Activated naive CD4-positive, alpha-beta T cell treated with anti-CD3 and anti-CD28 coated beads for 36 hours (primary cell): ENCODE measurements at regions of chr16 and their contacts with region 1.

Region 1: DNA sequence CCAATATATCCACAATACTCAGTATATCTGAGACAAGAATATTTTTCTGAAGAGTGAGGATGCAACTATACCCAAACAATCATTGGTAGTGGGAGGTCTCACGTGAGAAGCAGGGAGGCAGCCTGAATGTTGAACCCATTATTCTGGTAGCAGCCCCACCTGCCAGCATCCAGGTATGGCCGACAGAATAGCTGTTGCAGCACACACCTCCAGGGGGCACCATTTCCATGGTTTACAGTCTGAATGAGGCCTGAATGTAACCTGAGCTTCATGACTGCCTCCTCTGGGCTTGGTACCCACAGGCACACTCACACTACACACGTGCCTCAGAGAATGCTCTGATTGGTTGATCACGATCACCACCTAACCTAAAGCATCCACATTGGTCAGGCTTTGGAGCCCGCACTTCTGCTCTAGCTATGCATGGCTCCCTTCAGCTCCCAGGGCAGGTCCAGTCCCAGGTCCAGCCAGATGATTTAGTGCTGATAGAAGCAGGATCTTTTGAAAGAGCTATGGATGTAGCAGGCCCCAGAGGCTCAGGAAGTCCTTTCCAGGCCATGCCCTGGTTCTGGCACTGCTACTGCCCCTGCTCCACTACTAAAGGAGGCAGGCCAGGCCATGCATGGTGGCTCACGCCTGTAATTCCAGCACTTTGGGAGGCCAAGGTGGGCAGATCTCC is 11.0 kb upstream of the CBFB start:
- DNase-seq: peak; percentile 96
- H3K4me3 Mint-ChIP-seq: no peak overlapping the region
- H3K27ac Mint-ChIP-seq: no peak overlapping the region
- H3K4me1 Mint-ChIP-seq: peaks cover 5% of the 10 kb centered on the region
- H3K27me3 Mint-ChIP-seq: peaks cover 4% of the 10 kb centered on the region

Region 2: GRCh38 chr16:66894948-66895688 is 122.8 kb before region 1 on chr16:
- CTCF ChIA-PET with region 1: no interaction called
- intact Hi-C with region 1: loop called (anchors 2 kb)
- DNase-seq: peak; percentile 81
- H3K4me3 Mint-ChIP-seq: no peak overlapping the region
- H3K27ac Mint-ChIP-seq: no peak overlapping the region
- H3K4me1 Mint-ChIP-seq: peaks cover 8% of the 10 kb centered on the region
- H3K27me3 Mint-ChIP-seq: no peaks in the 10 kb centered on the region

Region 3: GRCh38 chr16:66961065-66961744 is 56.7 kb before region 1 on chr16 and contains the start of gene CES3:
- CTCF ChIA-PET with region 1: interaction called, 13 read pairs
- intact Hi-C with region 1: no loop called
- DNase-seq: peak; percentile 77
- H3K4me3 Mint-ChIP-seq: no peak within 1 kb of the TSS
- H3K27ac Mint-ChIP-seq: no peak within 1 kb of the TSS
- H3K4me1 Mint-ChIP-seq: peaks cover 19% of the 10 kb centered on the region
- H3K27me3 Mint-ChIP-seq: no peaks in the 10 kb centered on the region
- total RNA-seq, gene CES3: 0.17 to 0.55 TPM

Region 4: GRCh38 chr16:66991545-66992077 is 26.3 kb before region 1 on chr16:
- CTCF ChIA-PET with region 1: interaction called, 11 read pairs
- intact Hi-C with region 1: no loop called
- DNase-seq: no peak
- H3K4me3 Mint-ChIP-seq: no peak overlapping the region
- H3K27ac Mint-ChIP-seq: no peak overlapping the region
- H3K4me1 Mint-ChIP-seq: no peaks in the 10 kb centered on the region
- H3K27me3 Mint-ChIP-seq: no peaks in the 10 kb centered on the region

Region 5: DNA sequence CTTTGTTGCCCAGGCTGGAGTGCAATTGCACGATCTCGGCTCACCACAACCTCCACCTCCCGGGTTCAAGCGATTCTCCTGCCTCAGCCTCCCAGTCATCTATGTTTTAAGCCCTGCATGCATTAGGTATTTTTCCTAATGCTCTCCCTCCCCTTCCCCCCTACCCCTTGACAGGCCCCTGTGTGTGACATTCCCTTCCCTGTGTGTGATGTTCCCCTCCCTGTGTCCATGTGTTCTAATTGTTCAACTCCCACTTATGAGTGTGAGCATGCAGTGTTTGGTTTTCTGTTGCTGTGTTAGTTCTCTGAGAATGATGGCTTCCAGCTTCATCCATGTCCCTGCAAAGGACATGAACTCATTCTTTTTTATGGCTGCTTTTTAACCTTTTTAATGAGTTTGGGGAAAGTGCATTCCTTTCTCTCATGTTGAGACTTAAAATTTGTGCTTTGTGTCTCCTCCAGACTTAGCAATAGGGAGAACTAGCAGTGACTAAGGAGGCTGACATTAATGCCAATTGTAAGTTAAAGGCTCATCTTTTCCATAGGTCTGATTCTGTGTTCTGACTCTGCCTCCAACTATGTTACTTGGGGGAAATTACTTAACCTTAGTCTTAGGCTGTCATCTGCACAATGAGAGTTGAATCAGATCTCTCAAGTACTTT is 74.1 kb after region 1 on chr16:
- CTCF ChIA-PET with region 1: interaction called, 10 read pairs
- intact Hi-C with region 1: no loop called
- DNase-seq: no peak
- H3K4me3 Mint-ChIP-seq: no peak overlapping the region
- H3K27ac Mint-ChIP-seq: peak overlapping the region; percentile 47
- H3K4me1 Mint-ChIP-seq: peaks cover 6% of the 10 kb centered on the region
- H3K27me3 Mint-ChIP-seq: no peaks in the 10 kb centered on the region

Region 6: DNA sequence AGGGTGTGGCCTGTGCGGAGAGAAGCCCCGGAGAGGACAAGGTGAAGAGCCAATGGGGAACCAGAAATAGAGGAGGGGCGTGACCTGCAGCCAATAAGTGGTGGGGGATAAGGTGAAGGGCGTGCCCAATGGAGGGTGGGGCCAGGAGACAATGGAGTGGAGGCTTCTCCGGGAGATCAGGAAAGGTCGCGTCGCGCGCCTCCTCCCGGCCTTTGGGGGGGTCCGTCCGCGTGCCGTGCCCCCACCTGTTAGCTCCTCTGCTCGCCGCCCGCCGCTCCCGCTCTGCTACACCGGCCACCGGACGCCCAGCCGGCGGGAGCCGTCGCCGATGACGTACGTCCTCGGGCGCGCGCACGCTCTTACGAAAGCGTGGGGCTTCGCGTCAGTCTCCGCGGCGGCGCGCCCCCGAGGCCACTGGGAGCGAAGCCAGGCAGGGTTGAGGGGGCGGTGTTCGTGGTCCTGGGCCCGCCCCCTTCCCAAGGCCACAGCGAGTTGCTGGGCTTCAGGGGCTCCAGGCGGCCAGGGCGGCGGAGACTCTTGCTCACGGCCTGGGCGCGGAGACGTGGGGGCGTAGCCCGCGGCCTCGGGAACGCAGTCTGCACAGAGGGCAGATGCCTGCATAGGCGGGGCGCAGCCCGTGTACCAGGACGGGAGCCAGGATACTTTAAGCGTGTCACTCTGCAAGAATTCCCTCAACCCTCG is 165.8 kb after region 1 on chr16 and contains the start of gene MATCAP1:
- CTCF ChIA-PET with region 1: interaction called, 23 read pairs
- intact Hi-C with region 1: loop called (anchors 1 kb)
- DNase-seq: peak; percentile 97
- H3K4me3 Mint-ChIP-seq: peak within 1 kb of the TSS; percentile 50
- H3K27ac Mint-ChIP-seq: no peak within 1 kb of the TSS
- H3K4me1 Mint-ChIP-seq: peaks cover 12% of the 10 kb centered on the region
- H3K27me3 Mint-ChIP-seq: peaks cover 17% of the 10 kb centered on the region
- total RNA-seq, gene MATCAP1: 21.9 to 24.0 TPM